Dendritic cell treated with granulocyte-macrophage colony-stimulating factor and Interleukin-4, amounts not matched to agents 40 ng/mL and 50 ng/mL, for 4 days (primary cell): ENCODE measurements at regions of chr19 and their contacts with region 1.

Region 1: DNA sequence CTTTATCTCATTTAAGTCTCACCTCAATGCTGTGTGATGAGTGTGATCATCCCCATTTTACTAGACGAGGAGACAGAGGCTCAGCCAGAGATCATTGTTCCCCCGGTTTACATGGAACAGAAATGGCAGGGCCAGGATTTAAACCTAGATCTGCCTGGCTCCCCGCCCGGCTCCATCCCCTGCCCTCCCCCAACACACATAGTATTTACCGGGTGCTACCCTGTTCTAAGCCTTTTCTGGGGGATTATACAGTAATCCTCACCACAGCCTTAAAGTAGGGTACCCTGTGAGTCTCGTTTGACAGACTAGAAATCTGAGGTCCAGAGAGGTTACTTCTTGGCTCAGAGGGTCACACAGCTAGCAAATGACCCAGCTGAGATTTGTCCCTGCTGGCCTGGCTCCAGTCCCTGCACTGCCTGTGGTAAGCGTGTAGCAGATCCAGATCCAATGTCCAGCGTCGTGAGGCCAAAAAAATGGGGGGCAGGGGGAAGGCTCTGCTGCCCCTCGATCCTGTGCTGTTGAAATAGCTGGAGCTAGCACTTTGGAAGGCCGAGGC is 3.8 kb upstream of the KLC3 start:
- H3K4me3 Mint-ChIP-seq: no peak overlapping the region
- H3K27ac Mint-ChIP-seq: no peak overlapping the region
- H3K4me1 Mint-ChIP-seq: no peaks in the 10 kb centered on the region
- H3K27me3 Mint-ChIP-seq: peaks cover 15% of the 10 kb centered on the region

Region 2: DNA sequence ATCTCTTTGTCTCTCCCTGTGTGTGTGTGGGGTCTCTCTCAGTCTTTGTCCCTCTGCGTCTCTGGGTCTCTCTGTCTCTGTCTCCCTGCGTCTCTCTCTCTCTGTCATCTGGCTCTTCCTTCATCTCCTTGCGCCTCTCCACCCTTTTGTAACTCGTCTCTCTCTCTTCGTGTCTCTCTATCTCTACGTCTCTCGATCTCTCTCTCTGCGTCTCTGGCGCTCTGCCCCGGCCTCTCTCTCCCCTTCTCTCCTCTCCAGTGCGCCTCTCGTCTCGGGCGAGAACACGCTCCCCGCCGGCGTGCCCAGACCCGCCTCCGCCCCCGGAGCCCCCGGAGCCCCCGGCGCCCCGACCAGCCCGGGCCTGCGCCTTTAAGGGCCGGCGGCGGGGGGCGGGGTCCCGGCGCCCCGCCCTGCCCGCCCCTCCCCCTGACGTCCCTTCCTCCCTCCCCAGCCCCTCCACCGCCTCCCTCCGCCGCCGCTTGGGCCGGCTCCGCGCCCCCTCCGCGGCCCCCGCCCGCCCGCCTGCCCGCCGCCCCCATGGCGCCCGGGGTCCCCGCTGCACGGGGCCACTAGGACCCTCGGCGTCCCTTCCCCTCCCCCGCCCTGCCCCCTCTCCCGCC is 85.8 kb before region 1 on chr19 and contains the start of gene MARK4:
- intact Hi-C with region 1: loop called (anchors 5 kb)
- H3K4me3 Mint-ChIP-seq: peak within 1 kb of the TSS; percentile 85
- H3K27ac Mint-ChIP-seq: peak within 1 kb of the TSS; percentile 86
- H3K4me1 Mint-ChIP-seq: peaks cover 41% of the 10 kb centered on the region
- H3K27me3 Mint-ChIP-seq: peaks cover 5% of the 10 kb centered on the region

Region 3: GRCh38 chr19:46021531-46022041 is 684.8 kb after region 1 on chr19:
- intact Hi-C with region 1: no loop called
- H3K4me3 Mint-ChIP-seq: no peak overlapping the region
- H3K27ac Mint-ChIP-seq: no peak overlapping the region
- H3K4me1 Mint-ChIP-seq: peaks cover 29% of the 10 kb centered on the region
- H3K27me3 Mint-ChIP-seq: peaks cover 50% of the 10 kb centered on the region